Calu3 (cell line): ENCODE measurements at regions of chr16 and their contacts with region 1.

Region 1: DNA sequence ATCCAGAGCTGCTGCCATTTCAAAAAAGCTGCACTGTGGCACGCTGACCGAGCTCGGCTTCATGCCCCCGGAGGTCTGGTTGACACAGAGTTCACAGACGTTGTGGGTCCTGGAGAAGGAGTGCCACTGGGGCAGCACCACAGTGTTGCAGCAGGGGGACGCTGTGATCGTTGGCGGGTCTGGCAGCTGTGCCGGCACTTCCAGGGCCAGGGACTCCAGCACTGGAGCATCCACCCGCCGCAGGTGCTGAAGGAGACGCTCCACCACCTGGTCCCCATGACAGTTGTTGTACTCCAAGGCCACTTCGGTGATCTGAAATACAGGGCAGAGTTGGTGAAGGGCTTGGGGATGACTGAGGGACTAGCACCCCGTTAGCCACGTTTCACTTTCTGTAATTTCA is 23.5 kb downstream of the SNN start:
- DNase-seq: no peak
- H3K4me3 Mint-ChIP-seq: no peak overlapping the region
- H3K27ac Mint-ChIP-seq: no peak overlapping the region
- H3K4me1 Mint-ChIP-seq: peaks cover 17% of the 10 kb centered on the region
- H3K27me3 Mint-ChIP-seq: no peaks in the 10 kb centered on the region
- CTCF ChIP-seq: no peak

Region 2: DNA sequence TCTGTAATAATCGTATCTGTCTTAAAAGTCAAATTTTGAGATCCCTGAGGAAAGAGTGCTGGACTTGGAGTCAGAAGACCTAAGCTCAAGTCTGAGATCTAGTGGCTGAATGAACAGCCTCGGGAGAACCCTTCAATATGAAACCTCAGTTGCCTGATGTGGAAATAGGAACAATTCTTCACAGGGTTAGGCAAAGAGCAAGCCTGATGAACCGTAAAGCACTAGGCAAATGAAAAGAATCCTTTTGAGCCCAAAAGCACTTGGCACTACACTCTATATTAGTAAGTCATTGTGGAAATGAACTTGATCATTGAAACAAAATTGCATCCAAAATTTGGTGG is 30.7 kb after region 1 on chr16:
- CTCF ChIA-PET with region 1: no interaction called
- intact Hi-C with region 1: no loop called
- DNase-seq: no peak
- H3K4me3 Mint-ChIP-seq: no peak overlapping the region
- H3K27ac Mint-ChIP-seq: no peak overlapping the region
- H3K4me1 Mint-ChIP-seq: peaks cover 31% of the 10 kb centered on the region
- H3K27me3 Mint-ChIP-seq: no peaks in the 10 kb centered on the region
- CTCF ChIP-seq: no peak

Region 3: DNA sequence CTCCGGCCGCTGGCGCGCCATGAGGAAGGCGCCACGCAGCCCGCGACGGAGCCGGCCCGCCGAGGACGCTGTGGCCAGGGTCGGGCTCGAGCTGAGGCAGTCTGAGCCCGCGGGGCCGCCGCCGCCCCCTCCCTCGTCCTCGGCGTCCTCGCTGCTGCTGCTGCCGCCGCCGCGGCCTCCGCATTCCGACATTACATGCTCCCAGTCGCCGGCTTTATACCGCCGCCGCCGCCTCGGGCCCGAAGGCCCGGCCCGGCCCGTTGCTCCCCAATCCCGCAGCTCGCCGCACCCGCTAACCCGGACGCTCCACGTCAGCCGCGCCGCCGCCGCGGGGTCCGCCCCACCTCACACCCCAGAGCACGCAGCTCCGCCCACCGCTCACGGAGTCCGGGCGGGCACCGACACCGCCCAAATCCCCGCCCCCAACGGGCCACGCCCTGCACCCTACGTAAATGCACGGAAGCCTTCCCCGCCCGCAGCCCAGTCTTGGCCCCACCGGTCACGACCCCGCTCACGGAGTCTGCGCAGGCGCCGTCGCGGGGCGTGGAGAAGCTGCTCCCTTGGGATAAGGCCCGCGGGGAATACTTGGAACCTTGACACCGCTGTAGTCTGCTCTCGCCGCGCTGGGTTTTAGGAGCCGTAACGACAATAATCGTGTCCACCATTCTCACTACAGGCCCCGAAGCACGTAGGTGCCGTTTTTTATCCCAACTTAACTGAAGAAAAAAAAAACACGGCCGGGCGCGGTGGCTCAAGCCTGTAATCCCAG is 51.0 kb after region 1 on chr16 and contains the start of gene TXNDC11:
- CTCF ChIA-PET with region 1: interaction called, 3 read pairs
- intact Hi-C with region 1: loop called (anchors 2 kb)
- DNase-seq: peak; percentile 100
- H3K4me3 Mint-ChIP-seq: peak within 1 kb of the TSS; percentile 85
- H3K27ac Mint-ChIP-seq: peak within 1 kb of the TSS; percentile 98
- H3K4me1 Mint-ChIP-seq: peaks cover 48% of the 10 kb centered on the region
- H3K27me3 Mint-ChIP-seq: no peaks in the 10 kb centered on the region
- CTCF ChIP-seq: no peak
- total RNA-seq, gene TXNDC11: 51.3 and 52.1 TPM in 2 replicates